Panc1 (cell line): ENCODE measurements at regions of chr3 and their contacts with region 1.

Region 1: GRCh38 chr3:116757315-116757714 is 47.7 kb downstream of the TUSC7 start:
- DNase-seq: no peak
- ATAC-seq: no peak
- H3K4me3 ChIP-seq: no peak overlapping the region
- H3K27ac ChIP-seq: no peak overlapping the region
- H3K4me1 ChIP-seq: no peaks in the 10 kb centered on the region
- H3K27me3 ChIP-seq: no peaks in the 10 kb centered on the region
- CTCF ChIP-seq: no peak

Region 2: DNA sequence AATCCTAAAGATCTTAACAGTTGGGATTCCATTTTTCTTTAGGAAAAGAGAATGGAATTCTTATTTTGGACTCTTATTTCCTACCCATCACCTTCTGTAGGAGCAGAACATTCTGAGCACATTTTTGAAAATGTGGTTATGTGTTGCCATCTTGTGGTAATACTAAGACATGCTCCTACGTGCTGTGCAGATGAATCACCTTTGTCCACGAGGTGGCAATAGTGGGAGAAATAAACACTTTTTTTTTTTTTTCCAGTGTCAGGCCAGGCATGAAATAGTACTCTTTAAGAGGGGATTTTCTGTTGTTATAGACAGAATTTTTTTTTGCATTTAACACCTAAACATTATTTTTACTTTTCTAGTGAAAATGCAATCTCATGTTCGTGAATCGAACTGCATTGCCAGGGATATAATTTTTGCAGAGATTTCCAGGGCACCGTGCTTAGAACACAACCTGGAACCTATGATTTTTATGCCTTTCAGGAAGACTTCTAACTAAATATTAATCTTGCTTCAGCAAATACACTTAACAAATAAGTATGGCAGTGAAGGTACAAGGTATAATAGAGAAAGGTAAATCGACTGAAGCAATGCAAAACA is 937.4 kb before region 1 on chr3:
- CTCF ChIA-PET with region 1: no interaction called
- POLR2A ChIA-PET with region 1: no interaction called
- in situ Hi-C with region 1: no loop called
- intact Hi-C with region 1: loop called (anchors 2 kb)
- DNase-seq: peak; percentile 83
- ATAC-seq: peak; percentile 93
- H3K4me3 ChIP-seq: no peak overlapping the region
- H3K27ac ChIP-seq: no peak overlapping the region
- H3K4me1 ChIP-seq: no peaks in the 10 kb centered on the region
- H3K27me3 ChIP-seq: no peaks in the 10 kb centered on the region
- CTCF ChIP-seq: peak; percentile 93; the same call in 1 of the 2 replicates

Region 3: GRCh38 chr3:116140100-116140689 is 617.1 kb before region 1 on chr3:
- CTCF ChIA-PET with region 1: no interaction called
- POLR2A ChIA-PET with region 1: no interaction called
- in situ Hi-C with region 1: no loop called
- intact Hi-C with region 1: loop called (anchors 5 kb)
- DNase-seq: no peak
- ATAC-seq: no peak
- H3K4me3 ChIP-seq: no peak overlapping the region
- H3K27ac ChIP-seq: no peak overlapping the region
- H3K4me1 ChIP-seq: no peaks in the 10 kb centered on the region
- H3K27me3 ChIP-seq: no peaks in the 10 kb centered on the region
- CTCF ChIP-seq: peak; percentile 79; the same call in 1 of the 2 replicates

Region 4: DNA sequence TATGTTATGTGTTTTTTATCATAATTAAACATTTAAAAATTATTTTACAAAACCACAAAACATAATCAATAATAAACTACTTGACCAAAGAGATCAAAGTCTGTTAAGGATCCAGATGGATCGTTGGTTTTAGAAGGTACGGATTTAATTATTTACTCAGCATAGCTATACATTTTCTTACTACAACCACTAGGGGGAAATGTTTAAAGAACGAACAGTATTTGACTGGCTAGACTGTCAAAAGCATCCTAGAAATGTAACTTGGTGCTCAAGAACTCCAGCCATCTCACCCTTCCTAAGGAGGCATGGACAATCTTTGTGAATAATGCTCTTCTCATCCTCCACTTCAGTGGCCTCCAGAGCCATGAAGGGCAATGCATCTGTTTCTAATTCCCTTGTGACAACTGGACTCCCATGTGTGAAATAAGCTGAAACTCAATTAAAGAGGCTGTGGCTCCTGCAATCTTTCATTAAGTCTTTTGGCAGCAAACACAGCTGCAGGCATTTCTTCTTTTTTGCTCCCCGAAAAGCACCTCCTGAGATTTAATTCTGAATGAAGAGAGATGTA is 142.4 kb before region 1 on chr3:
- CTCF ChIA-PET with region 1: no interaction called
- POLR2A ChIA-PET with region 1: no interaction called
- in situ Hi-C with region 1: no loop called
- intact Hi-C with region 1: loop called (anchors 5 kb)
- DNase-seq: no peak
- ATAC-seq: no peak
- H3K4me3 ChIP-seq: no peak overlapping the region
- H3K27ac ChIP-seq: no peak overlapping the region
- H3K4me1 ChIP-seq: no peaks in the 10 kb centered on the region
- H3K27me3 ChIP-seq: no peaks in the 10 kb centered on the region
- CTCF ChIP-seq: peak; percentile 49

Region 5: GRCh38 chr3:116663161-116664110 is 93.9 kb before region 1 on chr3:
- CTCF ChIA-PET with region 1: no interaction called
- POLR2A ChIA-PET with region 1: no interaction called
- in situ Hi-C with region 1: no loop called
- intact Hi-C with region 1: no loop called
- DNase-seq: no peak
- ATAC-seq: no peak
- H3K4me3 ChIP-seq: no peak overlapping the region
- H3K27ac ChIP-seq: no peak overlapping the region
- H3K4me1 ChIP-seq: no peaks in the 10 kb centered on the region
- H3K27me3 ChIP-seq: no peaks in the 10 kb centered on the region
- CTCF ChIP-seq: no peak